ENCODE measurements at regions of chr1 and their contacts with region 1.

Region 1: GRCh38 chr1:110524311-110525251 is 5.6 kb upstream of the KCNA10 start:
- DNase-seq: peak; percentile 61
- H3K4me3 ChIP-seq: no peak overlapping the region
- H3K27ac ChIP-seq: no peak overlapping the region
- H3K4me1 ChIP-seq: no peaks in the 10 kb centered on the region
- CTCF ChIP-seq: peak; percentile 84

Region 2: GRCh38 chr1:110281363-110282290 is 243.0 kb before region 1 on chr1:
- CTCF ChIA-PET with region 1: no interaction called
- POLR2A ChIA-PET with region 1: no interaction called
- intact Hi-C with region 1: no loop called
- DNase-seq: no peak
- H3K4me3 ChIP-seq: no peak overlapping the region
- H3K27ac ChIP-seq: no peak overlapping the region
- H3K4me1 ChIP-seq: no peaks in the 10 kb centered on the region
- CTCF ChIP-seq: no peak

Region 3: DNA sequence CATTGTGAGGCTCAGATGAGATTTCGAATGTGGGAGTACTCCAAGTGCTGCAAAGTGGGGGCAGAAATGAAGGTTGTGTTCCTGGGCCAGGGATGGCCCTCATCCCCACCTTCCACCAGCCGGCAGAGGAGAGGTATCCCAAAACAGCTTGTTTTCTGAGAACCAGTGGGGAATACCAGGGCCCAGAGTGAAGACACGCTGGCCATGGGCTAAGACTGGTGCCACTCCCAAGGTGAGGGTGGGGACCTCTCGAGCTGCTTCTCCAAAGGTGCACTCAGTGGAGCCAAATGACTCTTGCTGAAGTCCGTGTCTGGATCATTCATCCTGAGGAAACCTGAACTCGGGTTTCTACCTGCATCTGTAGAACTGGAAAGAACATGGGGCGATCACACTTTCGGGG is 59.5 kb after region 1 on chr1:
- CTCF ChIA-PET with region 1: no interaction called
- POLR2A ChIA-PET with region 1: no interaction called
- intact Hi-C with region 1: no loop called
- DNase-seq: no peak
- H3K4me3 ChIP-seq: no peak overlapping the region
- H3K27ac ChIP-seq: no peak overlapping the region
- H3K4me1 ChIP-seq: no peaks in the 10 kb centered on the region
- CTCF ChIP-seq: no peak

Region 4: GRCh38 chr1:110594456-110595352 is 70.1 kb after region 1 on chr1:
- CTCF ChIA-PET with region 1: interaction called, 10 read pairs
- POLR2A ChIA-PET with region 1: no interaction called
- intact Hi-C with region 1: no loop called
- DNase-seq: no peak
- H3K4me3 ChIP-seq: no peak overlapping the region
- H3K27ac ChIP-seq: no peak overlapping the region
- H3K4me1 ChIP-seq: no peaks in the 10 kb centered on the region
- CTCF ChIP-seq: no peak

Region 5: GRCh38 chr1:110619412-110620249 is 95.0 kb after region 1 on chr1:
- CTCF ChIA-PET with region 1: interaction called, 17 read pairs
- POLR2A ChIA-PET with region 1: interaction called, 3 read pairs
- intact Hi-C with region 1: loop called (anchors 1 kb)
- DNase-seq: peak; percentile 90
- H3K4me3 ChIP-seq: peak overlapping the region; percentile 64
- H3K27ac ChIP-seq: no peak overlapping the region
- H3K4me1 ChIP-seq: peaks cover 29% of the 10 kb centered on the region
- CTCF ChIP-seq: peak; percentile 98

Region 6: DNA sequence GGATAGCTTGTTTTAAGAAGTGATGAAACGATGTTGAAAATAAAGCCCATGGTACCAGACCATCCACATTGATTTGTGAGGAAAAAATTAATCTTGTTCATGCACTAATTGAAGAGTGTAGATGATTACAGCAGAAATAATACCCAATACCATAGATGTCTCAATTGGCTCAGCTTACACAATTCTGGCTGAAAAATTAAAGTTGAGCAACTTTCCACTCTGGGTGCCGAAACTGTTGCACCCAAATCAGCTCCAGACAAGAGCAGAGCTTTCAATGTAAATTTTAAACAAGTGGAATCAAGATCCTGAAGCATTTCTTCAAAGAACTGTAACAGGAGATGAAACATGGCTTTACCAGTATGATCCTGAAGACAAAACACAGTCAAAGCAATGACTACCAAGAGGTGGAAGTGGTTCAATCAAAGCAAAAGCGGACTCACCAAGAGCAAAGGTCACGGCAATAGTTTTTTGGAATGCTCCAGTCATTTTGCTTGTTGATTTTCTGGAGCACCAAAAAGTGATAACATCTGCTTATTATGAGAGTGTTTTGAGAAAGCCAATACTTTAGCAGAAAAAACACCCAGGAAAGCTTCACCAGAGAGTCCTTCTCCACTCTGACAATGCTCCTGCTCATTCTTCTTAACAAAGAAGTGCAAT is 166.3 kb after region 1 on chr1:
- CTCF ChIA-PET with region 1: interaction called, 10 read pairs
- POLR2A ChIA-PET with region 1: no interaction called
- intact Hi-C with region 1: no loop called
- DNase-seq: no peak
- H3K4me3 ChIP-seq: no peak overlapping the region
- H3K27ac ChIP-seq: no peak overlapping the region
- H3K4me1 ChIP-seq: no peaks in the 10 kb centered on the region
- CTCF ChIP-seq: no peak

Region 7: DNA sequence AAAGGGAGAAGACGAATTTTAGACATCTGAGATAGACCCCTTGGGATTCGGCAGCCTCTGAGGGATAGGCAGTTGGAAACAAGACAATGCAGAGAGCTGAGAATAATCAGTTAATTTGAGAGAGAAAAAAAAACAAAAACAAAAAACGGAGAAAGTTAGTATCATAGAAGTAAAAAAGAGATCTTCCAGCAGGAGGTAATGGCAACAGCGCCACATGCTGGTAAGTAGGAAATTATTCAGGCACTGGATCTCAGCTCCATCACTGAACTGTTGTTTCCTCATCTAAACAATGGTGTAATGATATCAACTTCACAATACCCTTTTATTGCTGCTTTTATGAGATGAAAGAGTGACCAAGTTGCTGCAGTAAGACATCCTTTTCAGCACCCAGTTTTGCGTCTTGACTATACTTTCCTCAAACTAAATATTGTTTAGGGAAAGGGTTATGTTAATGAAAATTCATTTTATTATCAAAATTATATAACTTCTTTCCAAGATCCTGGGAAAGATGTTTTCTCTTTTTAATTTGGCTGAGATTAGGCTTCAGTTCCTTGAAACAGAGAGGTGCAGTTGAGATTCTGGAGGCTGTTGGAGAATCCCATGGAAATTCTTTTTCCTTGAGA is 241.6 kb after region 1 on chr1:
- CTCF ChIA-PET with region 1: no interaction called
- POLR2A ChIA-PET with region 1: no interaction called
- intact Hi-C with region 1: loop called (anchors 5 kb)
- DNase-seq: peak; percentile 82
- H3K4me3 ChIP-seq: peak overlapping the region; percentile 24
- H3K27ac ChIP-seq: no peak overlapping the region
- H3K4me1 ChIP-seq: peaks cover 14% of the 10 kb centered on the region
- CTCF ChIP-seq: peak; percentile 99

Region 8: DNA sequence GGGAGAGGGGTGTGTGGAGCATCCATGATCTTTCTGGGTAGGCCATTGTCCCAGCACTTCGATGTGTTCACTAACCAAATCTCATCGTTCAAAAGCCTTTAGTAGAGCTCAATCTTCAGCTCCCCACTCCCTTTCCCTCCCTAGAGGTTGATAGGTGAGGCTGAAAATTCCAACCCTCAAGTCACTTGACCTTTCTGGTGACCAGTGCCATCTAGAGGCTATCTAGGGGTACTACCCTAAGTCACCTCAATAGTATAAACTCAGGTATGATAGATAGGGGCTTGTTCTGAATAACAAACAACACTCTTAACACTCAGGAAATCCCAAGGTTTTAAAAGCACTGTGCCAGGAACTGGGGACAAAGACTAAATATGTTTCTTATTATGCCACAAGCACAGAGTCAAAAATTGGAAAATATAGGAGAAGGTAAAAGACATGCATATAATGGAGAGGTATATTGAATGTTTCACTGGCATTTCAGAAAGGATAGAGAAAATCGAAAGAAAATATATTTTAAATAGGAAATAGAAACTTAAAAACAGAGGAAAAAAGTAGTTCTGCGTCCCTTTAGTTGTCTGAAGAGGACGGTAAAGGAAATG is 305.5 kb after region 1 on chr1:
- CTCF ChIA-PET with region 1: no interaction called
- POLR2A ChIA-PET with region 1: no interaction called
- intact Hi-C with region 1: loop called (anchors 2 kb)
- DNase-seq: peak; percentile 80
- H3K4me3 ChIP-seq: no peak overlapping the region
- H3K27ac ChIP-seq: no peak overlapping the region
- H3K4me1 ChIP-seq: peaks cover 4% of the 10 kb centered on the region
- CTCF ChIP-seq: peak; percentile 93

Region 9: GRCh38 chr1:110990536-110990935 is 466.0 kb after region 1 on chr1:
- CTCF ChIA-PET with region 1: no interaction called
- POLR2A ChIA-PET with region 1: no interaction called
- intact Hi-C with region 1: loop called (anchors 10 kb)
- DNase-seq: no peak
- H3K4me3 ChIP-seq: no peak overlapping the region
- H3K27ac ChIP-seq: no peak overlapping the region
- H3K4me1 ChIP-seq: no peaks in the 10 kb centered on the region
- CTCF ChIP-seq: no peak

Measured in OCI-LY7 (cell line).